GM13977 (cell line): ENCODE measurements at regions of chr2 and their contacts with region 1.

Region 1: GRCh38 chr2:112254466-112255239 is at the start of gene ZC3H8:
- DNase-seq: peak; percentile 99
- CTCF ChIP-seq: peak; percentile 41

Region 2: DNA sequence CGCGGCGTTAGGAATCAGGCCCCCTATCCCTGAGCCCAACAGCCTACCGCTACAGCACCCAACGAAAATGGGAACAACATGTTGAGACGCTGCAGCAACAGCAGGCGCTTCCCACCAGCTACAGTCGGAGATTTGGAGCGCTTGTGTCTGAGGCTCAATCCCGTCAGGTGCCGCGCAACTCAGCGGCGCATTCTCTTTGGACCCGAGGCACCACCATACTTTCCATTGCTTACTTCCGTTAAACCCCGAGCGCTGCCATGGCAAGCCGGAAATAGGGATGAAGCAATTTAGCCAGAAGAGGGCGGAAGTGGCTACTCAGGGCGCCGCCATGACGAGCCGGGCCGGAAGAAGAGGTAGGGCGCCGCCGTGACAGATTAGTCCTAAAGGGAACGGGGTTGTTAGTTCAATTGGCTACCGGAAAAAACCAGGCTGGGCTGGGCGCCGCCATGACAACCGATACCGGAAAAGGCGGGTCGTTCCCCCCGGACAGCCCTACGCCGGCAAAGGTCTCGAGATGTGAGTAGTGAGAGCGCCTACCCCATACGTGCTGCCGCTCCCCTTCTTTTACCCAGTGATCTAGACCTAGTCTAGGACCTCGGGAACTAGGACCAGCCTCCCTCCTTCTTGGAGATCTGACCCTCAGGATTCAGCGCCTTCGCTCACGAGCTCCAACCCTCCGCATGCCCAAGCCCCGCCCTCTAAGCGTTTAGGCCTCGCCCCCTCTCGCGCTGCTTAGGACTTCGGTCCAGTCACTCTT is 329.7 kb after region 1 on chr2 and contains the start of gene CHCHD5:
- in situ Hi-C with region 1: loop called (anchors 25 kb)
- DNase-seq: peak; percentile 86
- CTCF ChIP-seq: peak; percentile 13